ENCODE measurements at regions of chr2 and their contacts with region 1.

Region 1: DNA sequence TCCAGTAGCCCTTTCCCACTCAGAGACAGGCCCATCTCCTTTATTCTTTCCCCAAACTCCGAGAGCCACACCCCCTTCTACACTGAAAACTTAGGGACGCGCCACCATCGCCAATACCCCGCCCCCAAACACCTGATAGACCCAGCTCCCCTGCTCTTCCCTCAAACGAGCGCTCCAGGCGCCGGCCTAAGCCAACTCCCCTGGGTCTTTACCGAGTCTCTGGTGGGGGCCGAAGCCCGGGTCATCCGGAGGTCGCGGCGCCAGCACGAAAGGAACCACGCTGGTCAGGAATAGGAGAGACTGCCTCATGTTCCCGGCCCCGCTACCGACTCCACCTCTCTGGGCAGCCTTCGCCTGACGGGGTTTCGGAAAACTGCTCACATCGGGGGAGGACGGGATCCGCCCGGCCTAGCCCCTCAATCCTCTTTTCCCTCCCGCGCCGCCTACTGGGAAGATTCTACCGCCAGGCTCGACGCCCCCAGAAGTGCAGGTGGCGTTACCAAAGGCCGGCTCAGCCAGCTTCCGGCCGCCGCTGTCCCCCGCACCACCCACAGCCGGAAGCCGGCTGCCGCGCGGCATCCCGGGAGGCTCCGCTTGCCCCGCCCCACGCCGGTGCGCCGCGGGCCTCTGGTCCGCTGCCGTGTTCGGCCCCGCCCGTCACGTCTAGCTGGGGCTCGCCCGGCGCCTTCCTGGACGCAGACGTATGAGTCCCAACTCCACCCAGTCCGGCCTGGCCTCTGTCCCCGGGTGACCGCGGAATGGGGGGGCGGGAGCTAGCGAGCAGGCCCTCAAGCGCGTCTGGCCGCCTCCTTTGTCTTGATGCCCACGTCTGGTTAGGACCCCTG is at the start of gene ADAM17:
- DNase-seq: peak; percentile 62 to 93 (median 81)
- ATAC-seq: peak; percentile 88
- H3K4me3 ChIP-seq: peak within 1 kb of the TSS; percentile 91 to 96
- H3K4me3 Mint-ChIP-seq: peak within 1 kb of the TSS; percentile 94
- H3K27ac ChIP-seq: peak within 1 kb of the TSS; percentile 93 to 94
- H3K27ac Mint-ChIP-seq: peak within 1 kb of the TSS; percentile 93
- H3K4me1 ChIP-seq: peaks cover 37% of the 10 kb centered on the region
- H3K4me1 Mint-ChIP-seq: peaks cover 49% of the 10 kb centered on the region
- H3K27me3 ChIP-seq: no peaks in the 10 kb centered on the region
- H3K27me3 Mint-ChIP-seq: no peaks in the 10 kb centered on the region
- CTCF ChIP-seq: no peak
- total RNA-seq, gene ADAM17: 20.0 to 25.1 TPM

Region 2: GRCh38 chr2:8836971-8837794 is 718.3 kb before region 1 on chr2 and contains the start of gene KIDINS220:
- CTCF ChIA-PET with region 1: no interaction called
- POLR2A ChIA-PET with region 1: no interaction called
- intact Hi-C with region 1: loop called in 1 of 2 experiments (anchors 2 kb)
- DNase-seq: peak; percentile 74 to 92 (median 85)
- ATAC-seq: peak; percentile 96
- H3K4me3 ChIP-seq: peak within 1 kb of the TSS; percentile 76 to 96
- H3K4me3 Mint-ChIP-seq: peak within 1 kb of the TSS; percentile 100
- H3K27ac ChIP-seq: peak within 1 kb of the TSS; percentile 62 to 81
- H3K27ac Mint-ChIP-seq: peak within 1 kb of the TSS; percentile 99
- H3K4me1 ChIP-seq: peaks cover 49% of the 10 kb centered on the region
- H3K4me1 Mint-ChIP-seq: peaks cover 55% of the 10 kb centered on the region
- H3K27me3 ChIP-seq: peaks cover 0 to 2% of the 10 kb centered on the region in 2 experiments
- H3K27me3 Mint-ChIP-seq: no peaks in the 10 kb centered on the region
- CTCF ChIP-seq: no peak
- total RNA-seq, gene KIDINS220: 26.2 to 28.8 TPM

Region 3: GRCh38 chr2:9474361-9474967 is 81.1 kb before region 1 on chr2 and contains the start of gene IAH1:
- CTCF ChIA-PET with region 1: interaction called, 3 read pairs
- POLR2A ChIA-PET with region 1: interaction called, 13 read pairs
- intact Hi-C with region 1: loop called (anchors 1 to 2 kb)
- DNase-seq: peak; percentile 58 to 86 (median 74)
- ATAC-seq: peak; percentile 80
- H3K4me3 ChIP-seq: peak within 1 kb of the TSS; percentile 83 to 91
- H3K4me3 Mint-ChIP-seq: peak within 1 kb of the TSS; percentile 84
- H3K27ac ChIP-seq: peak within 1 kb of the TSS; percentile 95 to 97
- H3K27ac Mint-ChIP-seq: peak within 1 kb of the TSS; percentile 90
- H3K4me1 ChIP-seq: peaks cover 18% of the 10 kb centered on the region
- H3K4me1 Mint-ChIP-seq: peaks cover 50% of the 10 kb centered on the region
- H3K27me3 ChIP-seq: no peaks in the 10 kb centered on the region
- H3K27me3 Mint-ChIP-seq: no peaks in the 10 kb centered on the region
- CTCF ChIP-seq: no peak
- total RNA-seq, gene IAH1: 48.2 to 52.5 TPM

Region 4: GRCh38 chr2:9782197-9782719 is 226.7 kb after region 1 on chr2:
- CTCF ChIA-PET with region 1: no interaction called
- POLR2A ChIA-PET with region 1: no interaction called
- intact Hi-C with region 1: loop called in 1 of 2 experiments (anchors 10 kb)
- DNase-seq: peak in 8 of 9 experiments; percentile 38 to 87 (median 56)
- ATAC-seq: peak; percentile 60
- H3K4me3 ChIP-seq: no peak overlapping the region
- H3K4me3 Mint-ChIP-seq: no peak overlapping the region
- H3K27ac ChIP-seq: peak overlapping the region in 1 of 2 experiments; percentile 64
- H3K27ac Mint-ChIP-seq: peak overlapping the region; percentile 87
- H3K4me1 ChIP-seq: peaks cover 26% of the 10 kb centered on the region
- H3K4me1 Mint-ChIP-seq: peaks cover 41% of the 10 kb centered on the region
- H3K27me3 ChIP-seq: no peaks in the 10 kb centered on the region
- H3K27me3 Mint-ChIP-seq: no peaks in the 10 kb centered on the region
- CTCF ChIP-seq: no peak

Region 5: DNA sequence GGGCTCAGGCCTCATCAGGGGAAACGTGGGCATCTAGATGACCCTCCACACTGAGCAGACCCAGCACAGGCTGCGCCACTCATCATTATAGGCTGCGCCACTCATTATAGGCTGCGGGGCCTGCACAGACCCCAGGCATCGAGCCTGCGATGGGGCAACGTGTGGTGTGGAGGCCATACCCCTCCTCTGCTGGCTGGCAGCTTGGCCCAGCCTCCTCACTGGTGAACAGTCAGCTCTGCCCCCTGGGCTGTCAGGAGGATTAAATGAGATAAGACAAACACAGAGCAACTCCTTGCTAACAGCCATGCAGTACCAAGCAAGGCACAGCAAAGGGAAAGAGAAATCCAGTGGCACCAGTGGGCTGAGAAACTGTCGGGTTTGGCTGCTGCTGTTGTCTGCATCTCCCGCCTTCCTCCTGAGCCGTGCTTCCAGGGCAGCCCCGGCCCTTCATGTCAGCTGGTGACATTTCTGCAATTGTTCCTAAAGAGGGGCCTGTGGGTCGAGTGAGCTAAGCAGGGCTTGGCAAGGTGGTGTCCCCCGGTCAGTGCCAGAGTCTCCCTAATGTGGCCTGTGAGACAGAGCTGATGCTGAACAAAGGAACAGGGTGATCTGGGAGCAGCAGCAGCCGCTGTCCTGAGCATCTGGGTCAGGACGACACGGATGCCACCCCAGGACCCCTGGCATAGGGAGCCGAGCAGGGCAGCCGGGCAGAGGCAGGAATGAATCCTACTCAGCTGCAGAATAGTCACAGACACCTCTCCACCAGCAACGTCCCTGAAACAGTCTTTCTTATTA is 615.7 kb after region 1 on chr2:
- CTCF ChIA-PET with region 1: no interaction called
- POLR2A ChIA-PET with region 1: no interaction called
- intact Hi-C with region 1: no loop called
- DNase-seq: no peak
- ATAC-seq: no peak
- H3K4me3 ChIP-seq: no peak overlapping the region
- H3K4me3 Mint-ChIP-seq: no peak overlapping the region
- H3K27ac ChIP-seq: no peak overlapping the region
- H3K27ac Mint-ChIP-seq: no peak overlapping the region
- H3K4me1 ChIP-seq: no peaks in the 10 kb centered on the region
- H3K4me1 Mint-ChIP-seq: no peaks in the 10 kb centered on the region
- H3K27me3 ChIP-seq: no peaks in the 10 kb centered on the region
- H3K27me3 Mint-ChIP-seq: no peaks in the 10 kb centered on the region
- CTCF ChIP-seq: no peak

Region 6: DNA sequence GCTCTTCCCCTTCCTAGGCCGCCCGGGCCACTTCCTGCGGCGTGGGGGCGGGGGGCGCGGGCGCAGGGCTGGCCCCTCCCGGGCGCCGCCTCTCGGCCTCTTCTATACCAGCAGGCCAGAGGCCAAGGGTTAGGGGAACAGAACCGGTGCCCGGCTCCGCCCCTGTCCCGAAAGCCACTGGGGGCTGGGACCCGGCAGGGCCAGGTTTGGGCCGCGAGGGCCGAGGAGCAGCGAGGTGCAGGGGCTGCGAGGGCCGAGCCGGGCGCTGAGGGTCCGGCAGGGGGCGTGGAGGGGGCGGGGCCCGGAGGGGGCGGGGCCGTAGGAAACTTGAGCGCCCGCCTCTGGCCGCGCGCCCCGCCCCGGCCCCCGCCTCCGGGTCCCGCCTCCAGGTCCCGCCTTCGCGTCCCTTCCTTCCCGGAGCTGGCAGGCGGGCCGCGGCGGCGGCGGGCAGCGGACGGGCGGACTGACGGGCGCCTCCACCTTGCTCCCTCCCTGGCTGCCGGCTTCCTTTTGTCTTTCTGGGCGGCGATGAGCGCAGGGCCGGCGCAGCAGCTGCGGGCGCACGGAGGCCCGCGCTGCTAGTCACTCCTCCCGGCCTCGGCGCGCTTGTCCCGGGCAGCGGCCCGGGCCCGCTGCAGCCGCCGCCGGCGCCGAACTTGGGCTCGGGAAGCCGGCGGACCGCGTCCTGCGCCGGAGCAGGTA is 747.1 kb after region 1 on chr2 and contains the start of gene HPCAL1:
- CTCF ChIA-PET with region 1: no interaction called
- POLR2A ChIA-PET with region 1: interaction called, 3 read pairs
- intact Hi-C with region 1: loop called in 1 of 2 experiments (anchors 10 kb)
- DNase-seq: peak; percentile 54 to 90 (median 80)
- ATAC-seq: peak; percentile 67
- H3K4me3 ChIP-seq: peak within 1 kb of the TSS; percentile 84 to 86
- H3K4me3 Mint-ChIP-seq: peak within 1 kb of the TSS; percentile 98
- H3K27ac ChIP-seq: peak within 1 kb of the TSS; percentile 52 to 73
- H3K27ac Mint-ChIP-seq: peak within 1 kb of the TSS; percentile 92
- H3K4me1 ChIP-seq: peaks cover 60% of the 10 kb centered on the region
- H3K4me1 Mint-ChIP-seq: peaks cover 70% of the 10 kb centered on the region
- H3K27me3 ChIP-seq: no peaks in the 10 kb centered on the region
- H3K27me3 Mint-ChIP-seq: no peaks in the 10 kb centered on the region
- CTCF ChIP-seq: peak; percentile 61
- total RNA-seq, gene HPCAL1: 25.0 to 25.6 TPM

Measured in CD8-positive, alpha-beta T cell (primary cell).